Activated CD8-positive, alpha-beta T cell treated with anti-CD3 and anti-CD28 coated beads for 36 hours (primary cell): ENCODE measurements at regions of chr6 and their contacts with region 1.

Region 1: GRCh38 chr6:43396407-43397149 is 27.1 kb upstream of the ZNF318 start:
- DNase-seq: no peak
- ATAC-seq: no peak
- H3K4me3 Mint-ChIP-seq: no peak overlapping the region
- H3K27ac Mint-ChIP-seq: no peak overlapping the region
- H3K4me1 Mint-ChIP-seq: peaks cover 17% of the 10 kb centered on the region
- H3K27me3 Mint-ChIP-seq: peaks cover 16% of the 10 kb centered on the region
- CTCF ChIP-seq: no peak

Region 2: DNA sequence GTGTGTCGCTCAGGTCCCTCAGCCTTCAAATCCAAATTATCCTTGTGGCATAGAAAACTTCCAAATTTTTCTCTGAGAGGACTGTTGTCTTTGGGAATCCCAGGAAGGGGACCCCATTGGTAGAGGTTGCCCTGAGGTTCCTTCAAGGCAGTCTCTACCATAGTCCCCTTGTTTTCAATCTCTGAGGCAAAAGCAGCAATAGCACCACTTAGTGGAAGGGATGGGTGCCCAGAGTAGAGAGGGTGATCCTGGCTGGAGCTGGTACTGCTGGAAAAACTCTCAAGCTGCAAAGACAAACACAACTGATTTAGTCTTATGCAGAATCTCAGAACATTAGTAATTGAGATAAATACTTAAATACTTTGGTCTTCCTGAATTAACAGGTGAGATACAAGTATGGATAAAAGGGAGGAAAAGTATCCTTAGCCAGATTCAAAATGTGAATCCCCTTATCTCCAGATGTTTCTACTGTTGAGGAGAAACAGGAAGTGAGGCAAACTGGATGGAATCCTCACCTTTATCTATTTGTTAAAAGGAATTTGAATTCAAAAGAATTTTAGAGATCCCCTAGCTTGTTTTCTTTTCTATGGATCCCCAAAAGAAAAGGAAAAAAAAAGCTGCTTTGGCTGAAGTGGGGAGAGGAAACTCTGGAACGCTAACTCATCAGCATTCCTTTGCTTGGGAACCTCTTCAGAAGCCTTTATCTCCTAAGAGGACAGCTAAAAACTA is 40.6 kb before region 1 on chr6:
- CTCF ChIA-PET with region 1: interaction called, 19 read pairs
- POLR2A ChIA-PET with region 1: no interaction called
- intact Hi-C with region 1: no loop called
- DNase-seq: no peak
- ATAC-seq: no peak
- H3K4me3 Mint-ChIP-seq: no peak overlapping the region
- H3K27ac Mint-ChIP-seq: no peak overlapping the region
- H3K4me1 Mint-ChIP-seq: peaks cover 2% of the 10 kb centered on the region
- H3K27me3 Mint-ChIP-seq: no peaks in the 10 kb centered on the region
- CTCF ChIP-seq: no peak